CD8-positive, alpha-beta T cell (primary cell): ENCODE measurements at regions of chr18 and their contacts with region 1.

Region 1: GRCh38 chr18:61093965-61094364 is 239.3 kb upstream of the CDH20 start:
- DNase-seq: no peak
- ATAC-seq: no peak
- H3K4me3 ChIP-seq: no peak overlapping the region
- H3K4me3 Mint-ChIP-seq: no peak overlapping the region
- H3K27ac ChIP-seq: no peak overlapping the region
- H3K27ac Mint-ChIP-seq: no peak overlapping the region
- H3K4me1 ChIP-seq: no peaks in the 10 kb centered on the region
- H3K4me1 Mint-ChIP-seq: no peaks in the 10 kb centered on the region
- H3K27me3 ChIP-seq: no peaks in the 10 kb centered on the region
- H3K27me3 Mint-ChIP-seq: no peaks in the 10 kb centered on the region
- CTCF ChIP-seq: no peak

Region 2: GRCh38 chr18:61034580-61034979 is 59.4 kb before region 1 on chr18:
- CTCF ChIA-PET with region 1: no interaction called
- POLR2A ChIA-PET with region 1: no interaction called
- intact Hi-C with region 1: loop called in 1 of 2 experiments (anchors 10 kb)
- DNase-seq: no peak
- ATAC-seq: no peak
- H3K4me3 ChIP-seq: no peak overlapping the region
- H3K4me3 Mint-ChIP-seq: no peak overlapping the region
- H3K27ac ChIP-seq: no peak overlapping the region
- H3K27ac Mint-ChIP-seq: no peak overlapping the region
- H3K4me1 ChIP-seq: no peaks in the 10 kb centered on the region
- H3K4me1 Mint-ChIP-seq: no peaks in the 10 kb centered on the region
- H3K27me3 ChIP-seq: no peaks in the 10 kb centered on the region
- H3K27me3 Mint-ChIP-seq: no peaks in the 10 kb centered on the region
- CTCF ChIP-seq: no peak